PC-9 (cell line): ENCODE measurements at regions of chr15 and their contacts with region 1.

Region 1: GRCh38 chr15:90086868-90087268 is 15.4 kb downstream of the IDH2 start:
- DNase-seq: peak in 1 of 2 experiments; percentile 47
- H3K4me3 ChIP-seq: no peak overlapping the region
- H3K27ac ChIP-seq: no peak overlapping the region
- H3K4me1 ChIP-seq: no peaks in the 10 kb centered on the region
- H3K27me3 ChIP-seq: no peaks in the 10 kb centered on the region
- CTCF ChIP-seq: peak; percentile 84

Region 2: DNA sequence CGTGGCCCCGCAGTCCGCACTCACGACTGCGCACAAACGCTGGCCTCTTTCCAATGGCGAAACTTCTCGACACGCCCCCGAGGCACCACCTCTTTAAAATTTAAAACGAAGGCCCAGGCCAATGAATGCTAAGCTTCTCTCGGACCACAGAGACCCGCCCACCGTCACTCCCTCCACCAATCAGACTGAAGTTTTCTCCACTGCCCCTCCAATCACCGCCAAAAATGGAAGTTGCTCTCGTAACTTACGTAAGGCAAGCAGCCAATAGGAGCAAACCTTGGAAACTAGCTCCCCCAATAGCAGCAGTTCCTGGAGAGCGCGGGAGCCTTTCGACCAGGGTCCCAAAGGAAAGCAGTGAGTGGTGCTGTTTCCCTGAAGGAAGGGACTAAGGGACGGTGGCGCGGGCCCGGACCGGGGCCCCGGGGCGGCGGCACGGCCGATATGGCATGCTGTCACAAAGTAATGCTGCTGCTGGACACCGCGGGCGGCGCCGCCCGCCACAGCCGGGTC is 511.7 kb before region 1 on chr15 and contains the start of gene TICRR:
- CTCF ChIA-PET with region 1: no interaction called
- POLR2A ChIA-PET with region 1: interaction called, 16 read pairs
- intact Hi-C with region 1: no loop called
- DNase-seq: peak; percentile 96 to 99
- H3K4me3 ChIP-seq: peak within 1 kb of the TSS; percentile 71
- H3K27ac ChIP-seq: peak within 1 kb of the TSS; percentile 59
- H3K4me1 ChIP-seq: peaks cover 24% of the 10 kb centered on the region
- H3K27me3 ChIP-seq: no peaks in the 10 kb centered on the region
- CTCF ChIP-seq: no peak
- total RNA-seq, gene TICRR: 17.8 and 23.6 TPM in 2 replicates